Motor neuron (in vitro differentiated cells): ENCODE measurements at regions of chr14 and their contacts with region 1.

Region 1: GRCh38 chr14:44912041-44912869 is 49.5 kb downstream of the KLHL28 start:
- ATAC-seq: peak in 1 of 8 experiments; percentile 43
- H3K4me3 ChIP-seq: no peak overlapping the region
- H3K27ac ChIP-seq: no peak overlapping the region
- H3K4me1 ChIP-seq: no peaks in the 10 kb centered on the region

Region 2: GRCh38 chr14:44531658-44532057 is 380.6 kb before region 1 on chr14:
- in situ Hi-C with region 1: no loop called
- ATAC-seq: peak in 5 of 8 experiments; percentile 77 to 87 (median 81)
- H3K4me3 ChIP-seq: no peak overlapping the region
- H3K27ac ChIP-seq: no peak overlapping the region
- H3K4me1 ChIP-seq: peaks cover 4 to 8% of the 10 kb centered on the region in 2 donors

Region 3: GRCh38 chr14:44669496-44669895 is 242.8 kb before region 1 on chr14:
- in situ Hi-C with region 1: no loop called
- ATAC-seq: no peak
- H3K4me3 ChIP-seq: no peak overlapping the region
- H3K27ac ChIP-seq: no peak overlapping the region
- H3K4me1 ChIP-seq: no peaks in the 10 kb centered on the region

Region 4: DNA sequence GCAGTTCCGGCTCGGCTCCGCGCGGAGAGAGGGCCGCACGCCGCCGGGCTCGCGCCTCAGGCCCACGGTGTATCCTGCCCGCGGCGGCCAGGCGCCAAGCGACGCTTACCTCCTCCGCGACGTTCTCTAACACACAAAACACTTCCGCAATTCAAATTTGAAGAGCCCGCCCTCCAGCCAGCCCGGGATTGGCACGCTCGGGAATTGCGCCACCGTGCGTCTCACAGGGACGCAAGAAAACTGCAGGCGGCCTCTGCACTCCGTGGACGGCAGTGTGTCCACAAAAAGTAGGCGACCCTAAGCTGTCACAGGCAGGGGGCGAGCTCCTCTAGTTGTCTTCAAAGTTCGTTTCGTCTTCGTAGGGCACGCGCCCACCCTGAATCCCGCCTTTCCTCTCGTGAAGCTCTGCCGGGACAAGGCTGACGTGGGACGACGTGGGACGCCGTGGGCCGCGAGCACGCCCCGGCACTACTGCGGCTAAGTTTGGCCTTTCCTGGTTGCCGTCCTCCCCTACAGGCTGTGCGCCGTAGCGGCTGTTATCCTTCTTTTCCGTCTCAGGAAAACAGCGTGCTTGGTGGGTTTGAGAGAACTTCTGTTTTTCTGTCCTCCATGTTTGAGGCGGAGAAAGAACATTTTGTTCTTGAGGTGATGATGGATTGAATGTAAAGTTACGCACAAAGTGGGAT is 341.0 kb after region 1 on chr14 and contains the start of gene MIS18BP1:
- in situ Hi-C with region 1: loop called in 5 of 9 experiments (anchors 25 kb)
- ATAC-seq: peak; percentile 91 to 98 (median 95)
- H3K4me3 ChIP-seq: peak within 1 kb of the TSS; percentile 43 to 52 (median 50)
- H3K27ac ChIP-seq: no peak within 1 kb of the TSS
- H3K4me1 ChIP-seq: peaks cover 3 to 4% of the 10 kb centered on the region in 2 donors
- total RNA-seq, gene MIS18BP1: 2.3 to 49.8 (median 8.3) TPM